Mammary epithelial cell (primary cell): ENCODE measurements at regions of chr18 and their contacts with region 1.

Region 1: DNA sequence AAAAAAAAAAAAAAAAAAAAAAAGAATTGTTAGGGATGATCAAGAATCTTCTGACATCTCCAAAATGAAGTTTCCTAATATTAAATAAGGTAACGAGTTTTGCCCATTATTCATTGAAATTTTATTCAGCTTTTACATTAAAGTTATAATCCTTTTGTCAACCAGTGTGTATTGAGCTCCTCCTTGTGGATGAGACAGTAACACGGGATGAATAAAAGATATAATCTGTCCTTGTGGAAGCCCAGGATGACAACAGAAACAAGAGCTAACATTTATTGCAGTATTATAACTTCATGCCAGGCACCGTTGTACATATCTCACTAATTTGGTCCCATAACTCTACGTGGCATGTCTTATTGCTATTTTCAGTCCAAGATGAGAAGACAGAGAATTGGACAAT is 33.4 kb upstream of the SERPINB7 start:
- DNase-seq: peak; percentile 40
- H3K4me3 ChIP-seq: no peak overlapping the region
- H3K27ac ChIP-seq: no peak overlapping the region
- H3K4me1 ChIP-seq: peaks cover 11% of the 10 kb centered on the region
- H3K27me3 ChIP-seq: no peaks in the 10 kb centered on the region
- CTCF ChIP-seq: peak; percentile 77 to 80

Region 2: DNA sequence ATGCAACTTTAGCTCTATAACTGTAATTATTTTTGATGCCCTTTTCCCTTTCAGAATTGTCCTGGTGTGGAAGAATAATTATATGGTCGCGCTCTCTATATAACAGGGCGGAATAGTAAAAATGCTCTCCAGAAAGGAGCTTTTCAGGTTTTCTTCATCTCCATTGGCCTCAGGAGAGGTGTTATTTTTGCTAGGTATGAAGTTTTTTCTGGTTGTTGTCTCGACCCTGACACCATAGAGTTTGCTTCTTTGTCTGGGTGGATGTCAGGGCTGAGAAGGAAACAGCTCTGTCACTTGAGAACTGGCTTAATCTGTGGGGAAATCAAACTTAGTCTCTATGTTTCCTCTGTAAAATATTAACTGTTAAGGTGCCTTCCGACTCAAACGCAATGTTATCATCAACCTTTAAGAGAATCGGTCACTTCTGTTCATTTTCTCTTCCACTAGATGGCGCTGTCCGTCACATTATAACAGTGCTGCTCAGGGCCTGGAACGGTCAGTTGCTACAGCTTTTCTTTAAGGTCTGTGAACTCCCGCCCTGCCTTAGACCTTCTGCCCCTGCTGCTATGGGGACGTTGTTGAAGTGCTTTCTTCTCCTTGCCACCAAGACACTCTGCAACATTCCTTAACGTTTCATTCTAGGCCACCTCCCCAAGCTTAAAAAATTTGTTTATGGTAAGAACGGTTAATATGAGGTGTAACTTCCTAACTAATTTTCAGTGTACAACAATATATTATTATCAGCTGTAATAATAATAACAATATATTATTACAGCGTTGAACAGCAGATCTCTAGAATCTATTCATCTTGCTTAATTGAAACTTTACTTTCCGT is 223.4 kb before region 1 on chr18:
- CTCF ChIA-PET with region 1: interaction called, 8 read pairs
- dilution Hi-C with region 1: no loop called
- in situ Hi-C with region 1: loop called (anchors 10 kb)
- intact Hi-C with region 1: loop called (anchors 1 kb)
- DNase-seq: peak; percentile 64
- H3K4me3 ChIP-seq: no peak overlapping the region
- H3K27ac ChIP-seq: no peak overlapping the region
- H3K4me1 ChIP-seq: no peaks in the 10 kb centered on the region
- H3K27me3 ChIP-seq: no peaks in the 10 kb centered on the region
- CTCF ChIP-seq: peak; percentile 55 to 67

Region 3: GRCh38 chr18:63588890-63589289 is 152.9 kb before region 1 on chr18:
- CTCF ChIA-PET with region 1: interaction called, 15 read pairs
- dilution Hi-C with region 1: no loop called
- in situ Hi-C with region 1: no loop called
- intact Hi-C with region 1: no loop called
- DNase-seq: no peak
- H3K4me3 ChIP-seq: no peak overlapping the region
- H3K27ac ChIP-seq: no peak overlapping the region
- H3K4me1 ChIP-seq: peaks cover 30% of the 10 kb centered on the region
- H3K27me3 ChIP-seq: no peaks in the 10 kb centered on the region
- CTCF ChIP-seq: no peak

Region 4: DNA sequence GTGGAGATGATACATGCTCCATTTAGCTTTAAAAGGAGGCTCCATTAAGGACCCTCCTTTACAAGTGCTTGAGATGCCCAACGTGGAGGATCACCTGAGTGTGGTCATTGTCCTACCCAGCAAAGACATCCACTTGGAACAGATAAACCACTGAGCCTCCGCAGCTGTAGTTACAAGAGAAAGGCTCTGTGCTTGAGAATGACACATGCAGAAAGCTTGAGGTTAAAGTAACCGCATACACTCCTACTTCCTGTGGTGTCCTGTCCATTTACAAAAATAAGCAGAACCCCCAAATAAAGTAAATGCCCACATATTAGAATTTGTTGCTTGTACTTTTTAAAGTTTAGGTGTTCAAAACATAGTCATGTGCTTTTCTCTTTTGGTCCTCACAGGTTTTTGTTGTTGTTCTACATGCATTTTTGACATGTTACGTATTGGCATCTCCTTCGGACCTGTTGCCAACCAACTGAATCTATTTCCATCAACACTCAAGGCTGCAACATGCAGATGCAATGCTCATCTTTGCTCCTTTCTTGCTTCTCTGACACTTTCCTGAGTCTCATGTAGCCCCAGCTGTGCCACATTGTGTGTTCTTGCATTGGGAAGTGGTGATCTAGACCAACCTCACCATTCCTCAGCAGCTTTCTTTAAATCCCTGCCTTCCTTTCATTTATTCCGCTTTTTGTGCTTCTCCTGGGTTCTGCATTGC is 89.5 kb after region 1 on chr18:
- CTCF ChIA-PET with region 1: no interaction called
- dilution Hi-C with region 1: no loop called
- in situ Hi-C with region 1: loop called in 1 of 2 experiments (anchors 10 kb)
- intact Hi-C with region 1: no loop called
- DNase-seq: peak; percentile 76
- H3K4me3 ChIP-seq: no peak overlapping the region
- H3K27ac ChIP-seq: peak overlapping the region; percentile 79
- H3K4me1 ChIP-seq: peaks cover 41% of the 10 kb centered on the region
- H3K27me3 ChIP-seq: no peaks in the 10 kb centered on the region
- CTCF ChIP-seq: no peak